ENCODE measurements at regions of chr5 and their contacts with region 1.

Region 1: GRCh38 chr5:149434162-149435014 is 55.3 kb upstream of the IL17B start:
- DNase-seq: peak; percentile 63
- ATAC-seq: peak; percentile 62
- H3K4me3 Mint-ChIP-seq: no peak overlapping the region
- H3K27ac Mint-ChIP-seq: no peak overlapping the region
- H3K4me1 Mint-ChIP-seq: peaks cover 28% of the 10 kb centered on the region
- H3K27me3 Mint-ChIP-seq: no peaks in the 10 kb centered on the region

Region 2: DNA sequence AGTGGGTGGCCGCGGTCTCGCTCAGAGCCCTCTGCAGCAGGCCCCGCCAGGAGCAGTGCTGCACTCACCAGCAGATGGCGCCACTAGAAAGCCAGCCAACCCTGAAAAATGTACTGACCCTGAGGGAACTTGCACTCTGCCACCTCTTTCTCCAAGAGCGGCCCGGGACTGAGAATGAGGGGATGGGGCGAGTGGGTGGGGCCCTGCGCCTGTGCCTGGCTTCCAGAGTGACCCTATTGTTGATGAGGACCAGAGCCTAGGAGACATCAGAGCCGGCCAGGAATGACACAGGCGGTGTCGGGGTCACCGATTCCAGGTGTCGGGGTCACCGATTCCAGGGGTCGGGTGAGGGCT is 52.4 kb before region 1 on chr5:
- CTCF ChIA-PET with region 1: interaction called, 36 read pairs
- POLR2A ChIA-PET with region 1: no interaction called
- DNase-seq: peak; percentile 78
- ATAC-seq: peak; percentile 85
- H3K4me3 Mint-ChIP-seq: no peak overlapping the region
- H3K27ac Mint-ChIP-seq: no peak overlapping the region
- H3K4me1 Mint-ChIP-seq: no peaks in the 10 kb centered on the region
- H3K27me3 Mint-ChIP-seq: peaks cover 2% of the 10 kb centered on the region

Region 3: GRCh38 chr5:149448831-149449714 is 14.7 kb after region 1 on chr5:
- CTCF ChIA-PET with region 1: interaction called, 31 read pairs
- POLR2A ChIA-PET with region 1: no interaction called
- DNase-seq: no peak
- ATAC-seq: no peak
- H3K4me3 Mint-ChIP-seq: no peak overlapping the region
- H3K27ac Mint-ChIP-seq: no peak overlapping the region
- H3K4me1 Mint-ChIP-seq: peaks cover 6% of the 10 kb centered on the region
- H3K27me3 Mint-ChIP-seq: no peaks in the 10 kb centered on the region

Region 4: DNA sequence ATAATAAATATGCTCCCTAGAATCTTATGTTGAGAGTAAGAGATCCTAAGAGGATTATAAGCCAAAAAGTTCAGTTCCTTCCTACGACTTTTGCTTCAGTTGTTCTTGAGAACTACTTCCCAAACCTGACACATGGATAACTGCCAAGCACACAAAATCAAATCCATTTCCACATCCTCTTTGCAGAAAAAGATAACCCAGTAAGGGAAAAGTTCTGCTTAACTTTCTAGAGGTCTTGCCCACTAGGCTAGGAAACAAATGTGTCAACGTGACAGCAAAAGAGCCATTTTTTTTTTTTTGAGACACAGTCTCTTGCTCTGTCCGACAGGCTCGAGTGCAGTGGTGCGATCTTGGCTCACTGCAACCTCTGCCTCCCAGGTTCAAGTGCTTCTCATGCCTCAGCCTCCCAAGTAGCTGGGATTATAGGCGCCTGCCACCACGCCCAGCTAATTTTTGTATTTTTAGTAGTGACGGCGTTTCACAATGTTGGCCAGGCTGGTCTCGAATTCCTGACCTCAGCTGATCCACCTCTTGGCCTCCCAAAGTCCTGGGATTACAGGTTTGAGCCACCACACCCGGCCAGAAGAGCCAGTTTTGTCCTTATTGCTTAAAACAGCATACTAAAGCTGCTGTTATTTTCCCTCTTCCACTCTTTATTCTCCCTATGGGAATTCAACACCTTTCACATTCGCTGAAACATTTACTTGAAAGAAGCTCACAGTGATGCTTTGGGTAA is 92.6 kb after region 1 on chr5:
- CTCF ChIA-PET with region 1: no interaction called
- POLR2A ChIA-PET with region 1: no interaction called
- DNase-seq: no peak
- ATAC-seq: no peak
- H3K4me3 Mint-ChIP-seq: no peak overlapping the region
- H3K27ac Mint-ChIP-seq: no peak overlapping the region
- H3K4me1 Mint-ChIP-seq: peaks cover 28% of the 10 kb centered on the region
- H3K27me3 Mint-ChIP-seq: no peaks in the 10 kb centered on the region

Region 5: GRCh38 chr5:149561848-149562247 is 127.5 kb after region 1 on chr5:
- CTCF ChIA-PET with region 1: interaction called, 44 read pairs
- POLR2A ChIA-PET with region 1: no interaction called
- DNase-seq: no peak
- ATAC-seq: no peak
- H3K4me3 Mint-ChIP-seq: no peak overlapping the region
- H3K27ac Mint-ChIP-seq: no peak overlapping the region
- H3K4me1 Mint-ChIP-seq: peaks cover 11% of the 10 kb centered on the region
- H3K27me3 Mint-ChIP-seq: no peaks in the 10 kb centered on the region

Region 6: GRCh38 chr5:149749481-149750365 is 315.3 kb after region 1 on chr5:
- CTCF ChIA-PET with region 1: no interaction called
- POLR2A ChIA-PET with region 1: no interaction called
- DNase-seq: no peak
- ATAC-seq: no peak
- H3K4me3 Mint-ChIP-seq: no peak overlapping the region
- H3K27ac Mint-ChIP-seq: no peak overlapping the region
- H3K4me1 Mint-ChIP-seq: no peaks in the 10 kb centered on the region
- H3K27me3 Mint-ChIP-seq: no peaks in the 10 kb centered on the region

Measured in activated CD8-positive, alpha-beta T cell treated with anti-CD3 and anti-CD28 coated beads, Interleukin-2, amount 10 ng/mL, durations not matched to agents 7 days and 5 days (primary cell).